PC-3 (cell line): ENCODE measurements at regions of chr1 and their contacts with region 1.

Region 1: GRCh38 chr1:112369392-112370285 is 26.4 kb upstream of the CTTNBP2NL start:
- DNase-seq: peak; percentile 92
- ATAC-seq: peak; percentile 100
- H3K4me3 ChIP-seq: no peak overlapping the region
- H3K27ac ChIP-seq: no peak overlapping the region
- H3K4me1 ChIP-seq: no peaks in the 10 kb centered on the region
- H3K27me3 ChIP-seq: peaks cover 39% of the 10 kb centered on the region
- CTCF ChIP-seq: peak; percentile 97

Region 2: DNA sequence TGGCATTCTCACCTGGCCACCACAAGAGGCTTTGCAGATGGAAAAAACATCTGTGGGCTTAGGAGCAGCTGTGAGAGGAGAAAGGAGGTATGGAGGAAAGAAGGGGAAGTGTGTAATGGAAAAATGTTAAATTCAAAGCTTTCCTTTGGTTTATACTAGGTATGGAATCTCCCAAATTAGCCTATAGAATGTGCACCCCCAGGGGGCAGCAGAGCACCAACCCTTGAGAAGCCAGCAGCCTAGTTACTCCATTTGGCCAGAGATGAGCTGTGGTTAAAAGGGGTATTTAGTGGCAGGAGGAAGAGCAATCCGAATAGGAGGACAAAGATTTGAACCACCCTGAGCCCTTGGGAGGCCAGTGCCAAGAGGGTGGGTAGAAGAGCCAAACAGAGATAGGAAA is 71.1 kb before region 1 on chr1:
- CTCF ChIA-PET with region 1: no interaction called
- POLR2A ChIA-PET with region 1: no interaction called
- intact Hi-C with region 1: loop called (anchors 5 kb)
- DNase-seq: peak; percentile 73
- ATAC-seq: peak; percentile 77
- H3K4me3 ChIP-seq: no peak overlapping the region
- H3K27ac ChIP-seq: no peak overlapping the region
- H3K4me1 ChIP-seq: no peaks in the 10 kb centered on the region
- H3K27me3 ChIP-seq: peaks cover 43% of the 10 kb centered on the region
- CTCF ChIP-seq: peak; percentile 81